A673 (cell line): ENCODE measurements at regions of chr4 and their contacts with region 1.

Region 1: DNA sequence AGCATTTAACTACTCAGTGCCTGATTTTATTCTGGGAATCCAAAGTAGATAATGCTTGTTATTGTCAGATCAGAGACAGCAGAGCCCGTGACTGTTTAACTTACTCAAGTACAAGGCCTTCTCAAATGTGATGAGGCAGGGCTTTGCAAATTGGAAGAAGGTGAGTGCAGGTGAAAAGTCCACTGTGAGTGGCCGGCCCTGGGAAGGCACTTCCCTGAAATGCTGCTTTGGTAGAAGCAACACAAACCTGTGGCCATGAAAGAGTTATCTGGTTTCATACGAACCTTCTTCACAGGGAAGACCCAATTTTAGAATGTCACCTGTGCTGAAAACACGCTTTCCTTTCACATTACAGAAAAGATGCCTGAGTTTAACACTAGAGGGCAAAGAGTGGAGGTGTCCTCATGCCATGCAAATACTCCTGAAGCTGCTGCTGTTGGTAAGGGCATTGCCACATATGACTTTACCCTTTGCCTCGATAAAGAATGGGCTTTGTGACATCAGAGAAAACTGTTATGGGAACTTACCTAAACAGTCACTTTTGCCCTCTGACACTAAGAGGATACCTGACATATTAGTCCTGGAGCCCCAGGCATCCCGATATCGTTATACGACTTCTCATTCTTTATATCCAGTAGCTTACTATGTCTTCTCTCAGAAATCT is 8.0 kb downstream of the PPARGC1A start:
- DNase-seq: no peak
- H3K4me3 ChIP-seq: no peak overlapping the region
- H3K27ac ChIP-seq: no peak overlapping the region
- H3K4me1 ChIP-seq: no peaks in the 10 kb centered on the region
- H3K27me3 ChIP-seq: peaks cover 12% of the 10 kb centered on the region
- CTCF ChIP-seq: no peak

Region 2: GRCh38 chr4:23819041-23819511 is 62.7 kb before region 1 on chr4:
- CTCF ChIA-PET with region 1: no interaction called
- POLR2A ChIA-PET with region 1: no interaction called
- intact Hi-C with region 1: loop called (anchors 2 kb)
- DNase-seq: no peak
- H3K4me3 ChIP-seq: no peak overlapping the region
- H3K27ac ChIP-seq: no peak overlapping the region
- H3K4me1 ChIP-seq: no peaks in the 10 kb centered on the region
- H3K27me3 ChIP-seq: no peaks in the 10 kb centered on the region
- CTCF ChIP-seq: no peak

Region 3: GRCh38 chr4:24067367-24068193 is 185.8 kb after region 1 on chr4:
- CTCF ChIA-PET with region 1: no interaction called
- POLR2A ChIA-PET with region 1: no interaction called
- intact Hi-C with region 1: no loop called
- DNase-seq: no peak
- H3K4me3 ChIP-seq: no peak overlapping the region
- H3K27ac ChIP-seq: no peak overlapping the region
- H3K4me1 ChIP-seq: no peaks in the 10 kb centered on the region
- H3K27me3 ChIP-seq: no peaks in the 10 kb centered on the region
- CTCF ChIP-seq: no peak